HEK293T (cell line): ENCODE measurements at regions of chr7 and their contacts with region 1.

Region 1: DNA sequence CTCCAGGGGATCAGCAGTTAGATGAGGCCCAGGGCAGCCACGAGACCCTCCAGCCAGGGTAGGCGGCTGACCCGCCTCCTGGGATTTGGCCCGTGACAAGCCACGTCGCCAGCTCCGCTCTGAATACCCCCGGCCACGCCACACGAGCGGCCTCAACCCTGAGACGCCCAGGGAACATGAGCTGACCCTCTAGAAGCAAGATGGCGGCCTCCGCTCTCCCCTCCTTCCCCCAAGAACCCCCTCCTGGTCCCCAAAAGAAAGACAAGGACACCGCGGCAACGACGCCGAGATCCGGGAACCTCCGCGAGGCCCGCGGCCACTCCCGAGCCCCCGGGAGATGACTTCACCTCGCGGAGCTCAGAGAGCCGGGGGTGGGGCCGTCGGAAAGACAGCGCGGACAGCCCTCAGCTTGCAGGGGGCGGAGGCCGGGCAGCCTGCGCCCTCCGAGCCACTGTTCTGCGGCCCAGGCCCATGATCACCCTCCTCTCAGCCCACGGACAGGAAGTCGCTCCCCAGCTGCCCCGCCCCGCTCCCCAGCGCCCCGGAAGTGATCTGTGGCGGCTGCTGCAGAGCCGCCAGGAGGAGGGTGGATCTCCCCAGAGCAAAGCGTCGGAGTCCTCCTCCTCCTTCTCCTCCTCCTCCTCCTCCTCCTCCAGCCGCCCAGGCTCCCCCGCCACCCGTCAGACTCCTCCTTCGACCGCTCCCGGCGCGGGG is at the start of gene RALA:
- DNase-seq: peak; percentile 91

Region 2: GRCh38 chr7:39252916-39253315 is 370.3 kb before region 1 on chr7:
- CTCF ChIA-PET with region 1: no interaction called
- POLR2A ChIA-PET with region 1: no interaction called
- DNase-seq: no peak

Region 3: DNA sequence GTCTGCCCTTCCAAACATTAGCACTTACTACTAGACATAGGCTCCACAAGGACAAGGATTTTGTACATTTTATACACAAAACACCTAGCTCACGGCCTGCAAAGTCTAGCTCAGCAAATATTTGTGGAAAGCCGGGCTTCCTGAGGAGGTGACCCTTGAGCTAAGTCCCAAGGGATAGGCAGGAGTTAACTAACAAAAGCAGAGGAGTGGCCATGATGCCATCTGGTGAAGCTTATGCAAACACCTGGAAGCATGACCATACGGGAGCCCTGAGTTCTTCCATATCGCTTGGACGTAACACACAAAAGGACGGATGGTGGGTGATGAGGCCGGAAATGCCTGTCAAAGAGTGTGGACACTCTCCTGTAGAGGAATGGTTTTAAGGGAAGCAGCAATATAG is 82.9 kb before region 1 on chr7:
- CTCF ChIA-PET with region 1: no interaction called
- POLR2A ChIA-PET with region 1: no interaction called
- DNase-seq: no peak

Region 4: DNA sequence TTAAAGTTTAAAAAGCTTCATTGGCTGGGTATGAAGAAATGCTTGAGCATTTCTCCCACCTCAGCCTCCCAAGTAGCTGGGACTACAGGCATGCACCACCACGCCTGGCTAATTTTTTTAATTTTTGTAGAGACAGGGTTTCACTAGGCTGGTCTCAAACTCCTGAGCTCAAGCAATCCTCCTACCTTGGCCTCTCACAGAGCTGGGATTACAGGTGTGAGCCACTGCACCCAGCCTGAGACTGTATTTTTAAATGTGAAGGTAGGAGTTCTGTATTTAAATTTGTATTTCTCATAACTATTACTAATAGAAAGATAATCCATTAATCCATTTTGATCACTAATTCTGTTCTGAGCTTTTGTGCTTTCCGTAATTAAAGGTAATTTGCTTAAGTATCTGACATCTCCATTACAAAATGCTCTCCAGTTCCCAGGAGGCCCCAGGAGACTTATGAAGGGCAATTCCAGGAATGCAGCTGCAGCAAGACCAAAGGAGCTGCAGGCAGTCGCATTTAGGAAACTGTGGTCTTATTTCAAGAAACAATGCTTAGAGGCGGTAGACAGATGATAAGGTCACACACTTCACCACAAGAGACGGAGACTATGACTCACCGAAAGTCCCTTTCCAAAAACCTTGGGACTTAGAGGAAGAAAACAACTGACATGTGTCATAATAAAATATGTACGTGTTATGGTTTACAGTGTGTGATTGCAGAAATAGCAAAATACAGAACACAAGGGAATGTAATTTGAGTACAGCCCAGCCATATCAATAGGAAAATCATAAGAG is 33.7 kb before region 1 on chr7:
- CTCF ChIA-PET with region 1: no interaction called
- POLR2A ChIA-PET with region 1: interaction called, 14 read pairs
- DNase-seq: peak; percentile 48

Region 5: DNA sequence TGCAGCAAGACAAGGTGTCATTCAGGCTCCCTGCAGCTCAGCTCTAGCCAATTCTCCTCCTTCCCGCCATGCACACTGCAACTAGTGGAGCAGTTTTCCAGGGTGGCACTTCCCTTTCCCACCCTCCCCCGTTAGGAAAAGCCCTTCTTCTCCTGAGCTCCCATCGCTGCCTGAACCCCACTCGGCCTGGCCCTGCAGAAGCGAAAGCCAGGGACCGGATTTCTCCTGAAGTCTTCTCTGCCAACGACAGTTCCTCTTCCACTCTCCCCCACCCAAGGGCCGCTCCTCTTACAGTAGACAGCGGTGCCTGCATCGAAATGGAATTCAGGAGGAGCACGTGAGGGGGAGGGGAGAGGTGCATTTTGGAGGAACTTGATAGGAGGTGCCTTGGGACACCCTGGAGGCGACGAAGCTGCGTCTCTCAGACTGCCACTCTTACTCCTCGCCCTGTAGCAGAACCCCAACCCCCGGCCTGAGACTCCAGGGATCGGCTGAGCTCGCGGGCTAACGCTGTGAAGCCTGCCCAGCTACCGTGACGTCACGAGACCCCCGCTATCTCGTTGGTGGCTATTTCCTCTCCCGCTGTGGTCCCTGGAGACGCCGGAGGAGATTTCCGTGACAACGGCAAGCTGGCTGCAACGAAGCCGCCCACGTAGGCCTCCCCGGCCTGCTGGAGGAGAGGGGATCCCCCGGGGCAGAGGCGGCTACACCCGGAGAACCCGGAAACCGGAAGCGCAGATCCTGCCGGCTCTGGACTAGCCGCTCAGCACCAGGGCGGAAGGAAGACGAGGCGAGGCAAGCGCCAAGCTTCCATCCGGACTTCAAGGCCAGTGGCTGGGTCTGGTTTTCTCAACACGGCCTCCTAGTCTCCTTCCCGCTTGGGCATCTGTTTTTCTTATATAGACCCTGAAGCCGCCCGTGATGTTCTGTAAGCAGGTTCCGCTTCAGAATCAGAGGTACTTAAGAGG is 109.9 kb after region 1 on chr7:
- CTCF ChIA-PET with region 1: no interaction called
- POLR2A ChIA-PET with region 1: interaction called, 10 read pairs
- DNase-seq: peak; percentile 95